PC-9 (cell line): ENCODE measurements at regions of chr17 and their contacts with region 1.

Region 1: DNA sequence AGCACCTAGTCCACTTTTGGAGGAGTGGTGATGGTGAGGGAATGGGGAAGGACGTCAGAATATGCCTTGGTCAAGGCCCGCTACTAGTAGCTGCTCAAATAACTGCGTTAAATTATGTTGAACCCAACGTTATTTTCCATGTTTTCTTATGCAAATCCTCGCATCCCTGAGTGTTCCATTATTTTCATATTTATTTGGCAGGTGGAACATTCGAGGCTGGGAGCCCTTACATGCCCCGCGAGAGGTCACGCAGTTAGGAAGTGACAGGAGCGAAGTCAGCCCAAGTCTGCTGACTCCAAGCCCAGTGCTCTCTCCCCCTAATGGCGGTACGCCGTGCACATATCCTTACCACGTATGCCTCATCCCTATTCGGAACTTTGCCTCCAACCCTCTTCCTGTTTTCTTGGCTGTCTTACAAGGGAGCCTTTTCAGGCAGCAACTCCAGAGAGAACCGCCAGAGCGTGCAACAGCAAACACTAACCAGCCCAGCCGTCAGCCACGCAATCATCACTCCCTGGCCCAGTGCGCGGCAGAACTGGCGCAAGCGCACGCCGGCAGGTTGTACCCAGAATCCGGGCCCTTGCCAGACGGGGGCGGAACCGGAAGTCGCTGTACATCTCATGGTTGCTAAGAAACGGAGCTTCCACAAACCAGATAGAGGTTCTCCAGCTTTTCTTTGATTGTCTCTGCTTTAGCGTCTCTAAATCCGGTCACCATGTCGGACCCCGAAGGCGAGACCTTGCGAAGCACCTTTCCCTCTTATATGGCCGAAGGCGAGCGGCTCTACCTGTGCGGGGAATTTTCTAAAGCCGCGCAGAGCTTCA is at the start of gene ODAD4:
- DNase-seq: peak; percentile 90 to 93
- H3K4me3 ChIP-seq: peak within 1 kb of the TSS; percentile 63
- H3K27ac ChIP-seq: peak within 1 kb of the TSS; percentile 44
- H3K4me1 ChIP-seq: peaks cover 27% of the 10 kb centered on the region
- H3K27me3 ChIP-seq: no peaks in the 10 kb centered on the region
- CTCF ChIP-seq: no peak; the same call in 1 of the 2 replicates
- total RNA-seq, gene ODAD4: 3.0 and 4.0 TPM in 2 replicates

Region 2: DNA sequence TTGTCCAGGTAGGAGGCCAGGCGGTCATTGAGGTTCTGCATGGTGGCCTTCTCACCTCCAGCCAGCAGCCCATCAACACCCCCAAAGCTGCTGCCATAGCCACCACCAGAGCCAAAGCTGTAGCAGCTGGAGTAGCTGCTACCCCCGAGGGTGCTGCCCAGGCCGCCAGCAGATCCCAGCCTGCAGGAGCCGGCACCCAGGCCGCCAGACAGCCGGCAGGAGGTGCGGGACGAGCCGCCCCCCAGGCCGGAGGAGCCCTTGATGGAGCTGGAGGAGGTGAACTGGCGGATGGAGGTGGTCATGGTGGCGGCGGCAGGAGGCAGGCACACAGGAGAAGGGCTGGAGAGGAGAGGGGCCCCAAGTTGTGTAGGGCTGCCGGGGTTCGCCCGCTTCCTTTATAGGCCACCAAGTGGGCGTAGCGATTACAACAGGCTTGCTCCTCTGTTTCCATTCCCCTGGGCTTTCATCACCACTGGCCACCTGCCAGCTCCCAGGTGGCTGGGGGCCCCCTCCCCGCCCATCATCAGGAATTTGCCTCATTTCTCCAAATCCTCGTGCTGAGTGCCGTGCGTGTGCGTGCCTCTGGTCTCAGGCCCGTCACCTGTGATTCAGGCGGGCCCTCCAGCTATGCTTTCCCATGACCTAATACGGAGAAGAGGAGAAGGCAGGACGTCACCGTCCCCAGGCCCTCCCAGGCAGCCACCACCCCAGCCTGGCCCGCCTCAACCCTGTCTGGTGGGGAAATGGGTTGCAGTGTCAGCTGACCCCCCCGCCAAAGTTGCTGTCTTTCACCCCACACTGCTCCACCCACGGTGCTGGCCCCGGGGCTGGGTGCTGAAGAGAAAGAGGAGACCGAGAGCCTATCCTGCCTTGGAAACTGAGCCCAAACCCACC is 305.8 kb before region 1 on chr17 and contains the start of gene KRT17:
- CTCF ChIA-PET with region 1: no interaction called
- POLR2A ChIA-PET with region 1: no interaction called
- intact Hi-C with region 1: no loop called
- DNase-seq: peak in 1 of 2 experiments; percentile 76
- H3K4me3 ChIP-seq: no peak within 1 kb of the TSS
- H3K27ac ChIP-seq: no peak within 1 kb of the TSS
- H3K4me1 ChIP-seq: peaks cover 8% of the 10 kb centered on the region
- H3K27me3 ChIP-seq: no peaks in the 10 kb centered on the region
- CTCF ChIP-seq: no peak
- total RNA-seq, gene KRT17: 29.0 and 80.8 TPM in 2 replicates

Region 3: GRCh38 chr17:41835800-41836549 is 94.2 kb before region 1 on chr17 and contains the start of gene NT5C3B:
- CTCF ChIA-PET with region 1: no interaction called
- POLR2A ChIA-PET with region 1: no interaction called
- intact Hi-C with region 1: no loop called
- DNase-seq: peak in 1 of 2 experiments; percentile 55
- H3K4me3 ChIP-seq: peak within 1 kb of the TSS; percentile 93
- H3K27ac ChIP-seq: no peak within 1 kb of the TSS
- H3K4me1 ChIP-seq: peaks cover 11% of the 10 kb centered on the region
- H3K27me3 ChIP-seq: no peaks in the 10 kb centered on the region
- CTCF ChIP-seq: no peak
- total RNA-seq, gene NT5C3B: 48.8 and 51.1 TPM in 2 replicates

Region 4: DNA sequence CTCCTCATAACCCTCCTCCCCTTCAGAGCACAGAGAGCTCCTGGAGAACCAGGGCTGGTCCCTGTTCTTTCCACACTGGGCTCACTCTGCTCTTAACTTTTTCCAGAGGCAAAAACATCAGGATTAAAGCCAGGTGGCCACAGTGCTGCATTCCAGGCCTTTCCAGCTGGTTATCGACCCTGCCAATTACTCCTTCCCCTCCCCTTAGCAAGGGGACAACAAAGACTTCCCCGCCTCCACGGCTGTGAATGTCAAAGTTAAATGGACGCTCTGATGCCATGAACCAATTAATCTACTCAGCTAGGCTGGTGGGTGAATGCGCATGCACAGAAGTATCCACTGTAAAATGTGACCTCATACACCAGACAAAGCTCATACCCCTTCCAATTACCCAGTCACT is 34.6 kb before region 1 on chr17:
- CTCF ChIA-PET with region 1: no interaction called
- POLR2A ChIA-PET with region 1: no interaction called
- intact Hi-C with region 1: no loop called
- DNase-seq: no peak
- H3K4me3 ChIP-seq: no peak overlapping the region
- H3K27ac ChIP-seq: no peak overlapping the region
- H3K4me1 ChIP-seq: no peaks in the 10 kb centered on the region
- H3K27me3 ChIP-seq: no peaks in the 10 kb centered on the region
- CTCF ChIP-seq: no peak

Region 5: DNA sequence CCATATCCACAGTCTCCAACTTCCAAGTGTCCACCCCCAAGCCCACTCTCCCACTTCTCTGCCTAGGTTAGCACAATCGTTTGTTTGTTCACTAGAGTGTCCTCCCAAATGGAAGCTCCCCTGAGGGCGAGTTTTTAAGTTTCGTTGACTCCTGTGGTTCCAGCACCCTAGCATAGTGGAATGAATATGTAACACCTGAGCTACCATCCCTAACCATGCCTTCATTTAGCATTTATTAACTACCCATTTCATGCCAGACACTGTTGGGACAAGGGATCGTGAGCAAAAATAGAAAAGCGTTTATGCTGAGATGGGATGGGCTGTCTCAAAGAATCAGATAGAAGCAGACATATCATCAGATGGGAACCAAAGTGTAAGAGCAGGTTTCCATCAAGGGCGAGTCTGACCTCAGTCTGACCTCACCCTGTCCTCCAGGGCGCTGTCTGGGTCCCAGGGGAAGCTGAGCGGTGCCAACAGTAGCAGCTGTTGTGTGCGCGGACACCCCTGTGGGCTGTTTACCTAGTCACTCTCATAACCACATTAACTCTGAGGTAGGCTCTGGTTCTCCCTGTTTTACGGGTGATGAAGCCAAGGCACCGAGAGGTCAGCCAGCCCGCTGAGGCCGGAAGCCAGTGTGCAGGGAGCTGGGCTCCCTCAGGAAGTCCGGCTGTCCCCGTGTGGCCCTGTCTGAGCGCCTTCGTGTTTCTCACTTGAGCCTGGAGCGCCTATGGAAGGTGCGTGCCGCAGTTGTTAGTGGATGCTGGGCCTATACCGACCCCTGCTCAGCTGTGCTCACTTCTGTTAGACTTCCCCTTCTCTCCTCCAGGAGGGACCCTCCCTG is 42.6 kb after region 1 on chr17:
- CTCF ChIA-PET with region 1: no interaction called
- POLR2A ChIA-PET with region 1: no interaction called
- intact Hi-C with region 1: no loop called
- DNase-seq: peak; percentile 81 to 90
- H3K4me3 ChIP-seq: no peak overlapping the region
- H3K27ac ChIP-seq: peak overlapping the region; percentile 44
- H3K4me1 ChIP-seq: peaks cover 25% of the 10 kb centered on the region
- H3K27me3 ChIP-seq: no peaks in the 10 kb centered on the region
- CTCF ChIP-seq: no peak

Region 6: DNA sequence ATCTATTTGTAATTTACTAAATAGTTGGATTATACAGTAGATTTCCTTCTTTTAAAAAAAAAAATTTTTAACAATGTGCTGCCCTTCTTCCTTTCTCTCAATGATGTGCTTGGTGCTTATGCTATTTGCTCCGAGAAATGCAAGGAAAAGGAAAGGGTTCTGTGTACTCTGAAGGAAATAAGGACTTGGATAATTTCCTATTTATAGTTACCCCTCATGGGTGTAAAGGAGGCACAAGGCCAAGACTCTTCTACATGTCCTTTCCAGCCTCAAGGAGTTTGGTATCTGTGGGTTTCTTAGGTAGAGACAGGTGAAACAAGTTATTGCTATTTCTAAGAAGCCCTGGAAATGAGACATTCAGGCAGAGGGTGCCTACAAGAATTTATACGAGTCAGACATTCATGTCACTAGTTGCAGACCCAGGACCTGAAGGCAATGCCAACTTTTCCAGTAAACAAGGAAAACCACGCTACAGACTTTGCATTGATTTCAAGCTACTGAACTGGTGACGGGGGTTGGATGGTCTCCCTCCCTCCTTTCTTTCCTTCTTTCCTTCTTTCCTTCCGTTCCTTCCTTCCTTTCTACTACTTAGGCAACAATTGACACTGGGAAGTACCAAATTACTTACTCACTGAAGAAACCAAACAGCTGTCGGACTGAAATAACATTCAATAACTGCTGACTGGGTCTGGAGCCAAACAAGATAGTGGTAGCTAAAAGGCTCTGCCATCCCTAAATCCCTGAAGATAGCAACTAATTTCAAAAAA is 297.8 kb after region 1 on chr17:
- CTCF ChIA-PET with region 1: interaction called, 14 read pairs
- POLR2A ChIA-PET with region 1: no interaction called
- intact Hi-C with region 1: no loop called
- DNase-seq: no peak
- H3K4me3 ChIP-seq: no peak overlapping the region
- H3K27ac ChIP-seq: peak overlapping the region; percentile 17; the same call in 1 of the 2 replicates
- H3K4me1 ChIP-seq: 0 out of 2 replicates have a peak, but pooled peaks cover 3% of the 10 kb centered on the region
- H3K27me3 ChIP-seq: no peaks in the 10 kb centered on the region
- CTCF ChIP-seq: no peak

Region 7: DNA sequence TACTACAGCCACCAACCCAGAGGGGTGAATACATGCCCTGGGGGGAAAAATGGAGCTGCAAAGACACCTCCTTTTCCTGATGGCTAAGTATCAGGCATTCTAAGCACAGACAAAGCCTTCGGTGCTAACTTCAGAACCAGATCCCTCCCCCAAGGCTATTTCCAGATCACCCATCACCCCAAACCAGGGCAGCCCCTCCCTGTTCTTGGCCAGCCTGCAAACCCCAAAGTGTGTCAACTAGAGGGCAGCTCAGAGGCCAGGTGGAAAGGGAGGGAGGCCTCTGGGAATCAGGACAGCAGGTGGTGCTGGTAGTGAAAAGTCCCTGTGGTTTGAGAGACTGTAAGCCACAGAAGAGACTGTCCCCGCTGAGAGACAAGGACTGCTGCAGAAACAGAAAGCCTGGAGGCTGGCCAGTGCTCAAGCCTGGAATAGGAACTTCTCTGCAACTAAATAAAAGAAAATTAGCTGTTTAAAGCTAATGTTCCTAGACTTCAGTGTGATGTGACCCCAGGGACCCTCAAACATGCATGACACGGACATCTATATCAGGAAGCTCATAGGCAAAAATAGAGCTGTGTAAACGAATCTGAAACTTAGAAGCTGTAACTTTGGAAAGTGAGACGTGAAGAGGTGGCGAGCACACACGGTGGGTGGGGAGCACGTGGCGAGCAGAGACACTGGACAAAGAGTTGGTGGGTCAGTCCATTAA is 688.4 kb after region 1 on chr17:
- CTCF ChIA-PET with region 1: no interaction called
- POLR2A ChIA-PET with region 1: interaction called, 19 read pairs
- intact Hi-C with region 1: no loop called
- DNase-seq: peak; percentile 79
- H3K4me3 ChIP-seq: no peak overlapping the region
- H3K27ac ChIP-seq: 0 out of 2 replicates have a peak overlapping the region, but pooled peaks have one; percentile 24
- H3K4me1 ChIP-seq: peaks cover 27% of the 10 kb centered on the region
- H3K27me3 ChIP-seq: no peaks in the 10 kb centered on the region
- CTCF ChIP-seq: peak; percentile 59; the same call in 1 of the 2 replicates